MCF 10A (cell line): ENCODE measurements at regions of chr2 and their contacts with region 1.

Region 1: DNA sequence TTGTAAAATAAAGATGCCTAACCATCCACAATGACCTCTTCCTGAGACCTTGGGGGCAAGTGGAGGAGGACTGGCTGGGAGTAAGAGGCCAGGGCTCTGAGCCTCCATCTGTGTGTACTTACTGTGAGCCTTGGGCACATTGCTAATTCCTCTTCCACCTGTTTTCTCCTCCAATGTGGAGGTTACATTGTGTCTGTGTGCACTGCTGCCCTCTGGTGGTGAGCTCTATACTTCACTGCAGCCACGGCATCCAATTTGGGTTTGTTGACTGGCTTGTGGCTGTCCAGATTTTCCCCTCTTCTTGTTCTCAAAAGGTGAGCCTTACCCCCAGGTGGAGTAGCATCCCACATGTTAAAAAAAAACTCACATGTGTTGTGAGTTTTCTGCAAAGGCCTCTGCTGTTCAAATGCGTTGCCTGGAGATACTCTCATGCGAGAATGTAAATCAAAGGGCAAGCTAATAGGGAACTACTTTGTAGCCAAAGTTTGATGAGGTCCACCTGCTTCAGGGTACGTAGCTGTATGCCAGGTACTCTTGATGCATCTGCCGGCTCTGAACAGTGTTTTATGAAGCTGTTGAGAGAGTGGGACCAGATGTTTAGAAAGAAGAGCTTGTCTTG is 80.8 kb downstream of the APOB start:
- DNase-seq: peak; percentile 73
- H3K4me3 Mint-ChIP-seq: no peak overlapping the region
- H3K27ac Mint-ChIP-seq: no peak overlapping the region
- H3K4me1 Mint-ChIP-seq: no peaks in the 10 kb centered on the region
- H3K27me3 Mint-ChIP-seq: peaks cover 46% of the 10 kb centered on the region
- CTCF ChIP-seq: peak; percentile 79

Region 2: GRCh38 chr2:20398956-20399567 is 564.0 kb before region 1 on chr2:
- CTCF ChIA-PET with region 1: no interaction called
- POLR2A ChIA-PET with region 1: no interaction called
- intact Hi-C with region 1: loop called (anchors 5 kb)
- DNase-seq: no peak
- H3K4me3 Mint-ChIP-seq: no peak overlapping the region
- H3K27ac Mint-ChIP-seq: no peak overlapping the region
- H3K4me1 Mint-ChIP-seq: peaks cover 25% of the 10 kb centered on the region
- H3K27me3 Mint-ChIP-seq: no peaks in the 10 kb centered on the region
- CTCF ChIP-seq: no peak

Region 3: GRCh38 chr2:20675701-20676352 is 287.2 kb before region 1 on chr2:
- CTCF ChIA-PET with region 1: interaction called, 24 read pairs
- POLR2A ChIA-PET with region 1: no interaction called
- intact Hi-C with region 1: loop called (anchors 5 kb)
- DNase-seq: peak; percentile 24
- H3K4me3 Mint-ChIP-seq: no peak overlapping the region
- H3K27ac Mint-ChIP-seq: no peak overlapping the region
- H3K4me1 Mint-ChIP-seq: peaks cover 6% of the 10 kb centered on the region
- H3K27me3 Mint-ChIP-seq: no peaks in the 10 kb centered on the region
- CTCF ChIP-seq: no peak

Region 4: DNA sequence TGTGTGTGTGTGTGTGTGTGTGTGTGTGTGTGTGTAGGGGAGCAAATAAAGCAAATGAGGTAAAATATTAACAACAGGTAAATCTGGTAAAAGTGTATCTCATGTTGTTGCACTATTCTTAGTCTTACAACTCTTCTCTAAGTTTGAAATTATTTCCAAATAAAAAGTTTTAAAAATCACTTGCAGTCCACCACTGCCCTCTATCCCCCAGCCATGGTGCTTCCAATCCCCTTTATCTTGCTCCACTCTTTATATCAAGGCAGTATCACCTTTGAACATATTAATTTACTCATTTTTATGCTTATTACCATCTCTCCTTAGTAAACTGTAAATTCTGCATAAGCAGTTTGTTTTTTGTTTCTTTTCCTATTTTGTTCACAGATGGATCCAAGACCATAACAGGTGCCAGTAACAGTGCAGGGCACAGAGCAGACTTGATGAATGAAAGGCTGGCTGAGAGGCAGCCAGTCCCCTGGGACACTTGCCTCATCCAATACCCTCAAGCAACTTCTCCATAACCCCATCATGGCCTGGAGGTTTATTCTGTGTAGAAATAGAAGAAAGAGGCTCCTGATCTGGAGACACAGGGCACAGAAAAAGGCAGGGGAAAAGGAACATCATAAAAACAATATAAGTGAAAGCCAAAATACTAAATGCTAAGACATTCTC is 207.8 kb before region 1 on chr2:
- CTCF ChIA-PET with region 1: interaction called, 15 read pairs
- POLR2A ChIA-PET with region 1: no interaction called
- intact Hi-C with region 1: no loop called
- DNase-seq: no peak
- H3K4me3 Mint-ChIP-seq: no peak overlapping the region
- H3K27ac Mint-ChIP-seq: no peak overlapping the region
- H3K4me1 Mint-ChIP-seq: no peaks in the 10 kb centered on the region
- H3K27me3 Mint-ChIP-seq: no peaks in the 10 kb centered on the region
- CTCF ChIP-seq: no peak

Region 5: GRCh38 chr2:20925265-20925889 is 37.7 kb before region 1 on chr2:
- CTCF ChIA-PET with region 1: interaction called, 11 read pairs
- POLR2A ChIA-PET with region 1: no interaction called
- intact Hi-C with region 1: no loop called
- DNase-seq: peak; percentile 36
- H3K4me3 Mint-ChIP-seq: no peak overlapping the region
- H3K27ac Mint-ChIP-seq: no peak overlapping the region
- H3K4me1 Mint-ChIP-seq: no peaks in the 10 kb centered on the region
- H3K27me3 Mint-ChIP-seq: peaks cover 12% of the 10 kb centered on the region
- CTCF ChIP-seq: no peak